ENCODE measurements at regions of chr18 and their contacts with region 1.

Region 1: GRCh38 chr18:50203801-50204604 is 9.1 kb upstream of the MYO5B start:
- DNase-seq: peak; percentile 49
- ATAC-seq: peak; percentile 95
- H3K4me3 ChIP-seq: peak overlapping the region; percentile 28 to 43
- H3K27ac ChIP-seq: no peak overlapping the region
- H3K4me1 ChIP-seq: peaks cover 0 to 14% of the 10 kb centered on the region in 2 experiments; a peak in 1 of 4 replicates
- H3K27me3 ChIP-seq: no peaks in the 10 kb centered on the region
- CTCF ChIP-seq: peak; percentile 61 to 84 (median 74)
- POLR2A ChIP-seq: no peak
- RAD21 ChIP-seq: peak; percentile 88

Region 2: DNA sequence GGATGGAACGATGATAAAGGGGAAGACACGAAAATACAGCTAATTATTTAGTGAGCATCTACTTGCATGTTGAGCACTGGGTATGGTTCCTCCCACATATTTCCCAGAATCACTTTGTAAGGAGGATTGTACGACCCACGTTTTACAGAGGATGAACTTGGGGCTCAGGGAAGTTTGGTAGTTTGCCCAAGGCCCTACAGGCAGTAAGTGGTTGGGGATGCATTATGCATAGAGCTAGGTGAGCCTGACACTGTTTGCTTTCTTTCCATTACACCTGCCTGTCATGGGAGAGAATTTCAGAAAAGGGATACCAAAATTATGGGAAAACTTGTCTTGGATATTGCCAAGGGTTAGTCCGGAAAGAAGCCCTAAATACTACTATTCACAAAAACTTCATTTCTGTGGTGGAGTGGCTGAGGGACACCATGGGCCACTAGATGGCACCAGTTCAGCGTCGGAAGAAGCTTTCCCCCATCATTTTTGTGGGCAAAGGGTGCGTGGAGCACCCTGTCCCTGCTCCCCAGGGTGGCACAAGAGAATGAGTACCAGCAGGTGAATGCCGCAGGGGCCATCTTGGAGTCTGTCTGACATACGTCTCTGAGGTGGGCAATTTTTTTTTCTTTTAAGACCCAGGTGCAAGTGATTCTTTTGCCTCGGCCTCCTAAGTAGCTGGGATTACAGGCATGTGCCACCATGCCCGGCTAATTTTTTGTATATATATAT is 693.4 kb before region 1 on chr18:
- CTCF ChIA-PET with region 1: interaction called, 10 read pairs
- POLR2A ChIA-PET with region 1: no interaction called
- RAD21 ChIA-PET with region 1: no interaction called
- intact Hi-C with region 1: loop called (anchors 1 kb)
- DNase-seq: peak; percentile 73
- ATAC-seq: peak; percentile 97
- H3K4me3 ChIP-seq: no peak overlapping the region
- H3K27ac ChIP-seq: no peak overlapping the region
- H3K4me1 ChIP-seq: no peaks in the 10 kb centered on the region
- H3K27me3 ChIP-seq: no peaks in the 10 kb centered on the region
- CTCF ChIP-seq: peak; percentile 87 to 93 (median 88)
- POLR2A ChIP-seq: no peak
- RAD21 ChIP-seq: peak; percentile 97

Region 3: DNA sequence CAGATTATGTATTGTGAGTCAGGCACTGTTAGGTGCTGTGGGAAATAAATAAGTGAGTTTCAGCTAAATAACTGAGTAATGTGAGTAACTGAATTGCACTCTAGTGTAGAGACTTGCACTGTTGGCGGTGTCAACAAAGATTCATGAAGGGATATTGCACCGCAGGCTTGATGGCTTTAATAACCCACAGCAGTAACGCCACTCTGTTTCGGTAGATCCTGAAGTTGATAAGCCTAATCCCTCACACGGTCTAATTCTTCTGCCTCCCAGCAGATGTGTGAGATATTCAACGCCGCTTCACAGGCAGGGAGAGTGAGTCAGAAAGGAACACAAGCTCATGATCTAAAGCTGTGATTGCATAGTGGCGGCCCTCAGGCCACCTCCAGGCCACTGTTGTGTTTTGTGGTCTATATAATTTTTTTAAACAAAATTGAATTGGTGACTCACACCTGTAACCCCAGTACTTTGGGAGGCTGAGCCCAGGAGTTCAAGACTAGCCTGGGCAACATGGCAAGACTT is 547.9 kb before region 1 on chr18:
- CTCF ChIA-PET with region 1: no interaction called
- POLR2A ChIA-PET with region 1: no interaction called
- RAD21 ChIA-PET with region 1: no interaction called
- intact Hi-C with region 1: no loop called
- DNase-seq: peak; percentile 97
- ATAC-seq: peak; percentile 95
- H3K4me3 ChIP-seq: no peak overlapping the region
- H3K27ac ChIP-seq: peak overlapping the region; percentile 17; the same call in 1 of the 2 replicates
- H3K4me1 ChIP-seq: peaks cover 17 to 26% of the 10 kb centered on the region in 2 experiments
- H3K27me3 ChIP-seq: peaks cover 57% of the 10 kb centered on the region
- CTCF ChIP-seq: no peak
- POLR2A ChIP-seq: no peak
- RAD21 ChIP-seq: peak; percentile 34; the same call in 1 of the 2 replicates

Region 4: DNA sequence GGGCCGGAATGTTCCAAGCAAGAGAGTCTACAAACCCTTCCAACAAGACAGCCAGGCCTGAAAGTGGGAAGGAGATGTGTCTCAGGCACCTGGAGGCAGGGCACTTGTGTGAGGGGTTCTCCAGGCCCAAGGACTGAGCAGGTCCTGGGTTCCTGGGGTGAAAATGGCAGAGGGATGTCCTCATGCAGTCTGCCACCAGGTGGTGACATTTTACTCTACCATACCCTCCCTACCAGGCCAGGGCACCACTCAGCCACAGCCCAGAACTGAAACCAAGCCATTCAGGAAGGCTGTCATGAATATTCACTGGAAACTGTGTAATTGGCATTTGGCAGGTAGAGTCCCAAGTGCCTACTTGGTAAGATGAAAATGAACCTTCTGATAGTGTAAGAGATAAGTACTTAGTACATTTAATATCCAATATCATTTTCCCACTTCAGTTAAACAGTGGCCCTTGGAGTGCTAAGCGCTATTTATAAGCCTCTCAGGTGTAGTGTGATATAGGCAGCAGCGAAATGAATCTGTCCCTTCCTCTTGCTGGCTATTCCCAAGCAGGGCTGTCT is 194.1 kb before region 1 on chr18:
- CTCF ChIA-PET with region 1: interaction called, 4 read pairs
- POLR2A ChIA-PET with region 1: no interaction called
- RAD21 ChIA-PET with region 1: interaction called in 1 of 2 experiments, 3 read pairs
- intact Hi-C with region 1: loop called (anchors 2 kb)
- DNase-seq: peak; percentile 52
- ATAC-seq: peak; percentile 100
- H3K4me3 ChIP-seq: no peak overlapping the region
- H3K27ac ChIP-seq: no peak overlapping the region
- H3K4me1 ChIP-seq: peaks cover 0 to 20% of the 10 kb centered on the region in 2 experiments; a peak in 1 of 4 replicates
- H3K27me3 ChIP-seq: no peaks in the 10 kb centered on the region
- CTCF ChIP-seq: peak; percentile 71 to 77 (median 76)
- POLR2A ChIP-seq: no peak
- RAD21 ChIP-seq: peak; percentile 81

Region 5: GRCh38 chr18:50111265-50111792 is 92.7 kb before region 1 on chr18:
- CTCF ChIA-PET with region 1: no interaction called
- POLR2A ChIA-PET with region 1: no interaction called
- RAD21 ChIA-PET with region 1: no interaction called
- intact Hi-C with region 1: loop called (anchors 5 kb)
- DNase-seq: no peak
- ATAC-seq: no peak
- H3K4me3 ChIP-seq: no peak overlapping the region
- H3K27ac ChIP-seq: no peak overlapping the region
- H3K4me1 ChIP-seq: no peaks in the 10 kb centered on the region
- H3K27me3 ChIP-seq: no peaks in the 10 kb centered on the region
- CTCF ChIP-seq: peak; percentile 23 to 34 (median 32); a peak in 3 of 6 replicates
- POLR2A ChIP-seq: no peak
- RAD21 ChIP-seq: peak; percentile 48

Region 6: DNA sequence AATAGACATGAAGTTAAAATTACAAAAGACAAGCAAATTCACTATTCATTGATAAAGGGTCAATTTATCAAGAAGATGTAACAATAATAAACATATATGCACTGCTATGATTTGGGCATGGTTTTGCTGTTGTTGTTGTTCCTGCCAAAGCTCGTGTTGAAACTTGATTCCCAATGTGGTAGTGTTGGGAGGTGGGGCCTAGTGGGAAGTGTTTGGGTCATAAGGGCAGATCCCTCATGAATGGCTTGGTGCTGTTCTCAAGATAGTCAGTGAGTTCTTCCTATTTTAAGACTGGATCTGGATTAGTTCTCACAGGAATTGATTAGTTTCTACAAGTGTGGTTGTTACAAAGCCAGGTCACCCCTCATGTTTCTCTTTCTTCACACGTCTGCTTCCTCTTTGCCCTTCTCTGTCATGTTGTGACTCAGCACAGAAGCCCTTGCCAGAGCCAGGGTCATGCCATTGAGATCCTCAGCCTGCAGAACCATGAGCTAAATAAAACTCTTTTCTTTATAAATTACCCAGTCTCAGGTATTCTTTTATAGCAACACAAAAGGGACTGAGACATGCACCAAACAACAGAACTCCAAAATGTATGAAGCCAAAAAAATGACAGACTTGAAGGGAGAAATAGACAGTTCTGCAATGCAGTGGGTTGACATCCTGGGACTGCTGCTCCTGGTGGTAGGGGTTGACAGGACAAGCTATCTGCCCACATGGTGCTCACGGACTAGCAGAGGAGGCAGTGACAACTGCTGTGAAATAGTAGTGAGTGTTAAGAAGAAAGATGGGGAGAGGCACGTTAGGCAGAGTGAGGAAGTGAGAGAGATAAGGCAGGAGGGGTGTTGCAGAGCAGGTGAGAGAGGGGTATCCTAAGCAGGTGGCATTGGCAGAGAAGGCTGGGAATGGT is 152.3 kb after region 1 on chr18:
- CTCF ChIA-PET with region 1: interaction called, 55 read pairs
- POLR2A ChIA-PET with region 1: no interaction called
- RAD21 ChIA-PET with region 1: interaction called, 6 to 7 read pairs
- intact Hi-C with region 1: no loop called
- DNase-seq: peak; percentile 28
- ATAC-seq: peak; percentile 83
- H3K4me3 ChIP-seq: no peak overlapping the region
- H3K27ac ChIP-seq: peak overlapping the region; percentile 29
- H3K4me1 ChIP-seq: peaks cover 14 to 15% of the 10 kb centered on the region in 2 experiments
- H3K27me3 ChIP-seq: no peaks in the 10 kb centered on the region
- CTCF ChIP-seq: peak in 2 of 3 experiments; percentile 35 to 36; a peak in 2 of 6 replicates
- POLR2A ChIP-seq: no peak
- RAD21 ChIP-seq: no peak; the same call in 1 of the 2 replicates

Measured in HCT116 (cell line).